ENCODE measurements at regions of chr6 and their contacts with region 1.

Region 1: GRCh38 chr6:36360241-36361054 is 23.8 kb upstream of the BNIP5 start:
- DNase-seq: no peak
- ATAC-seq: peak; percentile 65
- H3K4me3 ChIP-seq: no peak overlapping the region
- H3K27ac ChIP-seq: no peak overlapping the region
- H3K4me1 ChIP-seq: peaks cover 36% of the 10 kb centered on the region
- H3K27me3 ChIP-seq: no peaks in the 10 kb centered on the region
- CTCF ChIP-seq: peak; percentile 78 to 93 (median 81)
- EP300 ChIP-seq: peak in 1 of 2 experiments; percentile 16; a peak in 1 of 4 replicates
- POLR2A ChIP-seq: no peak
- RAD21 ChIP-seq: peak; percentile 94

Region 2: GRCh38 chr6:36123257-36124139 is 236.9 kb before region 1 on chr6:
- CTCF ChIA-PET with region 1: interaction called, 82 read pairs
- POLR2A ChIA-PET with region 1: interaction called, 4 read pairs
- RAD21 ChIA-PET with region 1: interaction called, 35 read pairs
- SMC1A ChIA-PET with region 1: interaction called, 75 read pairs
- in situ Hi-C with region 1: loop called (anchors 5 kb)
- intact Hi-C with region 1: loop called (anchors 1 kb)
- DNase-seq: no peak
- ATAC-seq: peak; percentile 92
- H3K4me3 ChIP-seq: no peak overlapping the region
- H3K27ac ChIP-seq: no peak overlapping the region
- H3K4me1 ChIP-seq: peaks cover 26% of the 10 kb centered on the region
- H3K27me3 ChIP-seq: no peaks in the 10 kb centered on the region
- CTCF ChIP-seq: peak; percentile 75 to 93 (median 91)
- EP300 ChIP-seq: 0 out of 4 replicates have a peak, but pooled peaks of 1 of the 2 experiments have one; percentile 26
- POLR2A ChIP-seq: no peak
- RAD21 ChIP-seq: peak; percentile 92

Region 3: DNA sequence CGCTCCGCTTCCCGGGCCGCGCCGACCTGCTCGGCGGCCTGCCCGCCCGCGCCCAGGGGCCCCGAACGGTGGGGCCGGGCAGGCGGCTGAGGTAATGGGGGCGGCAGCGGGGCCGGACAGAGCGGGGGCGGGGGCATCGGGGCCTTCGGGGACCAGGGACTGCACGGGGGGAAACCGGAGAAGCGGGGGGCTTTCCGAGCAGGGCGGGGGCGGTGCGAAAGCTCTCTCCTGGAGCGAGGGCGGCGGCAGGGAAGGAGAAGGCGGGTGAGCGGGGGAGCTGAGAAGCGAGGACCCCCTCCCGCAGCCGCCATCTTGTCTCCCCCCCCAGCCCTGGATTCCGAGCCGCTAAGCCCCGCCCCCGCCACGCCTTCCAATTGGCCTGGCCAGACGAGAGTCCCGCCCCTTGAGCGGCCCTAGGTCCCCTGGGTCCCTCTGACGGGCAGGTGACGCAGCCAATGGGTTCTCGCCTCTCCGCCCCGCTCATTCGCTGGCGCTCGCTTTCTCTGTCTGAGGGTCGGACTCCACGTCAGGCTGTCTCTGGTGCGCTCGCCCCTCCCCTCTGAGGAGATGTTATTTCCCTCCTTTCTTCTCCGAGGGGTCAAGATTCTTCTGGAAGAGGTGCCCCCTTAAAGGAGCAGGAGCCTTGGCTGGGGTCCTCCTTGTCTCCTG is 163.4 kb before region 1 on chr6:
- CTCF ChIA-PET with region 1: interaction called, 7 read pairs
- POLR2A ChIA-PET with region 1: interaction called, 5 read pairs
- RAD21 ChIA-PET with region 1: interaction called, 8 read pairs
- SMC1A ChIA-PET with region 1: interaction called, 11 read pairs
- in situ Hi-C with region 1: no loop called
- intact Hi-C with region 1: loop called (anchors 5 kb)
- DNase-seq: peak; percentile 88
- ATAC-seq: peak; percentile 97
- H3K4me3 ChIP-seq: peak overlapping the region; percentile 79
- H3K27ac ChIP-seq: peak overlapping the region; percentile 64
- H3K4me1 ChIP-seq: peaks cover 5% of the 10 kb centered on the region; the same call in 1 of the 2 replicates
- H3K27me3 ChIP-seq: no peaks in the 10 kb centered on the region
- CTCF ChIP-seq: no peak
- EP300 ChIP-seq: no peak
- POLR2A ChIP-seq: peak; percentile 79
- RAD21 ChIP-seq: no peak

Region 4: DNA sequence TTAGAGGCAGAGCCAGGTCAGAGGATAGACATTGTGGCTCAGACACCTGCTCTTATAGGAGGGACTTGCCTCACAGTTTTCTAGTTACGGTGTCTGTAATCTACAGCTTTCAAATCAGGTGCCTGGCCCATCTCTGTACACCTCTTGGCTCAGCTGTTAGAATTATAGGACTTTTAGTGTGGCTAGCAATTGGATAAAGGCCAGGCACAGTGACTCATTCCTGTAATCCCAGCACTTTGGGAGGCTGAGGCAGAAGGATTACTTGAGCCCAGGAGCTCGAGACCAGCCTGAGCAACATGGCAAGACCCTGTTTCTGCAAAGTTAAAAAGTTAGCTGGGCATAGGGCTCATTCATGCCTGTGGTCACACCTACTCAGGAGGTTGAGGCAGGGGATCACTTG is 143.9 kb before region 1 on chr6:
- CTCF ChIA-PET with region 1: no interaction called
- POLR2A ChIA-PET with region 1: no interaction called
- RAD21 ChIA-PET with region 1: no interaction called
- SMC1A ChIA-PET with region 1: no interaction called
- in situ Hi-C with region 1: no loop called
- intact Hi-C with region 1: no loop called
- DNase-seq: no peak
- ATAC-seq: no peak
- H3K4me3 ChIP-seq: no peak overlapping the region
- H3K27ac ChIP-seq: no peak overlapping the region
- H3K4me1 ChIP-seq: no peaks in the 10 kb centered on the region
- H3K27me3 ChIP-seq: no peaks in the 10 kb centered on the region
- CTCF ChIP-seq: no peak
- EP300 ChIP-seq: no peak
- POLR2A ChIP-seq: no peak
- RAD21 ChIP-seq: no peak

Region 5: GRCh38 chr6:36314221-36315014 is 46.0 kb before region 1 on chr6:
- CTCF ChIA-PET with region 1: interaction called, 313 read pairs
- POLR2A ChIA-PET with region 1: interaction called, 4 read pairs
- RAD21 ChIA-PET with region 1: interaction called, 19 read pairs
- SMC1A ChIA-PET with region 1: interaction called, 41 read pairs
- in situ Hi-C with region 1: no loop called
- intact Hi-C with region 1: no loop called
- DNase-seq: no peak
- ATAC-seq: peak; percentile 50
- H3K4me3 ChIP-seq: no peak overlapping the region
- H3K27ac ChIP-seq: no peak overlapping the region
- H3K4me1 ChIP-seq: peaks cover 20% of the 10 kb centered on the region
- H3K27me3 ChIP-seq: no peaks in the 10 kb centered on the region
- CTCF ChIP-seq: no peak
- EP300 ChIP-seq: no peak
- POLR2A ChIP-seq: no peak
- RAD21 ChIP-seq: no peak

Region 6: DNA sequence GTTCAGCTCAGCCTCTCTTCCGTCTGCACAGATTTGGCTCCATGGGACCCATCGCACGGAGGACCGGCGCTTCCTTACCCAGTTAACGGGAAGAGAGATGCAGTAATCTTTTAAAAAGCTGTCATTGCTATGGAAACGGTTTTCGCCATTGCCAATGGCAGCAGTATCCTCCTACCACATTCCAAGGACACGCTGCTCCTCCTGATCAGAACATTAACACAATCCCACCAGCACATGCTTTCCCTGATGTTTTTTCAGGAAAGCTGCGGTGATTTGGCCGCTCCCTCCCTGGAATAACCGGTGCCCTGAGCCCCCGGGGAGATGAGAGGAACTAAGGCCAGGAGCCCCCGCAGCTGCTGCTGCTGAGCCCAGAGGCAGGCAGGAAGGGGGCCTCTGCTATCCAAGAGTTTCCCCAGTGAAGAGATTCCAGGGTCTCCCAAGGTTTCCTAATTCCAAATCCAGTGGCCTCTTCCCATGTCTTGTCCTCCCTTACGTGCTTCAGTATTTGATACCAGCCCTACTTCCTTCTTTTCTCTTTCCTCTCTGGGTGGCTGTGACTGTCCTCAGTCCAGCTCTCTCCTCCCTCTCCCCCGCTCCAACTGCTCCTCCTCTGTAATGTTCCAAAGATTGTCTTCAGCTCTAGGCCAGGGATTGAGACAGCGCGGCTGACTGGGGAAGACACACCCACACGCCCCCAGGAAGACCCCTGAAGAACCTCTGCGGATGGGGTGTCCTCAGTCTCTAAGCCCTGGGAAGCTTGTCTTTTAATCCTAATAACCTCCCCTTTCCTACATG is 26.3 kb before region 1 on chr6:
- CTCF ChIA-PET with region 1: interaction called, 483 read pairs
- POLR2A ChIA-PET with region 1: interaction called, 44 read pairs
- RAD21 ChIA-PET with region 1: interaction called, 311 read pairs
- SMC1A ChIA-PET with region 1: interaction called, 386 read pairs
- in situ Hi-C with region 1: no loop called
- intact Hi-C with region 1: no loop called
- DNase-seq: no peak
- ATAC-seq: no peak
- H3K4me3 ChIP-seq: no peak overlapping the region
- H3K27ac ChIP-seq: no peak overlapping the region
- H3K4me1 ChIP-seq: peaks cover 22% of the 10 kb centered on the region
- H3K27me3 ChIP-seq: peaks cover 0 to 6% of the 10 kb centered on the region in 2 experiments; a peak in 1 of 4 replicates
- CTCF ChIP-seq: no peak
- EP300 ChIP-seq: no peak
- POLR2A ChIP-seq: no peak
- RAD21 ChIP-seq: no peak

Region 7: GRCh38 chr6:36442671-36443470 is 82.4 kb after region 1 on chr6 and contains the starts of genes KCTD20 and PXT1:
- CTCF ChIA-PET with region 1: interaction called, 5 read pairs
- POLR2A ChIA-PET with region 1: no interaction called
- RAD21 ChIA-PET with region 1: interaction called, 12 read pairs
- SMC1A ChIA-PET with region 1: no interaction called
- in situ Hi-C with region 1: no loop called
- intact Hi-C with region 1: no loop called
- DNase-seq: peak; percentile 48
- ATAC-seq: peak; percentile 85
- H3K4me3 ChIP-seq: peak within 1 kb of the TSS; percentile 86
- H3K27ac ChIP-seq: peak within 1 kb of the TSS; percentile 95
- H3K4me1 ChIP-seq: peaks cover 7% of the 10 kb centered on the region
- H3K27me3 ChIP-seq: no peaks in the 10 kb centered on the region
- CTCF ChIP-seq: no peak
- EP300 ChIP-seq: peak; percentile 32 to 56; a peak in 1 of 4 replicates
- POLR2A ChIP-seq: peak; percentile 91
- RAD21 ChIP-seq: no peak
- polyA plus RNA-seq, gene KCTD20: 18.1 to 20.1 TPM
- polyA plus RNA-seq, gene PXT1: 0.52 to 0.60 TPM

Region 8: DNA sequence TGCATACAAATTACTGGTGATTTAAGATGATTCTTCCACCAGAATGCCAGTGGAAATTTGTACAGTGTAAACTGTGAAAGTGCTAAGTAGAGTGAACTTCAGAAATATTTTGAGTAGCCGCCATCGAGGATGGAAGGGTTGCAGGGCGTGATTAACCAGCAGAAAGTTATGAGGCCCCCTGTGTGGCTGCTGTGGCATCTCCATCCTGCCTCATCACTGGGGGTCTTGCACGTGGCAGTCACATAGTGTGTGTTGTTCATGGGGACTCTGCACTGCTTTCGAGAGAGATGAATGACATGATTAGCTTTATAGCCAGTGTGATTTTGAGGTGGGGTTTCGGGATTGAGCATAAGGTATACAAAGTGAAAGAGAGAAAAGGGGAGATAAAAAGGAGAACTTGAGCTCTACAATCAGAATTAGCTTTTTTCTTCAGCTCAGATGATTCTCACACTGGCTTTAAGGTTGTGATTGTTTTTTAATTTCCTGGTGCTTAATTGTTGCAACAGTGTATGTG is 108.8 kb after region 1 on chr6:
- CTCF ChIA-PET with region 1: no interaction called
- POLR2A ChIA-PET with region 1: no interaction called
- RAD21 ChIA-PET with region 1: no interaction called
- SMC1A ChIA-PET with region 1: no interaction called
- in situ Hi-C with region 1: no loop called
- intact Hi-C with region 1: no loop called
- DNase-seq: no peak
- ATAC-seq: no peak
- H3K4me3 ChIP-seq: no peak overlapping the region
- H3K27ac ChIP-seq: no peak overlapping the region
- H3K4me1 ChIP-seq: peaks cover 4% of the 10 kb centered on the region
- H3K27me3 ChIP-seq: no peaks in the 10 kb centered on the region
- CTCF ChIP-seq: no peak
- EP300 ChIP-seq: no peak
- POLR2A ChIP-seq: no peak
- RAD21 ChIP-seq: no peak

Region 9: DNA sequence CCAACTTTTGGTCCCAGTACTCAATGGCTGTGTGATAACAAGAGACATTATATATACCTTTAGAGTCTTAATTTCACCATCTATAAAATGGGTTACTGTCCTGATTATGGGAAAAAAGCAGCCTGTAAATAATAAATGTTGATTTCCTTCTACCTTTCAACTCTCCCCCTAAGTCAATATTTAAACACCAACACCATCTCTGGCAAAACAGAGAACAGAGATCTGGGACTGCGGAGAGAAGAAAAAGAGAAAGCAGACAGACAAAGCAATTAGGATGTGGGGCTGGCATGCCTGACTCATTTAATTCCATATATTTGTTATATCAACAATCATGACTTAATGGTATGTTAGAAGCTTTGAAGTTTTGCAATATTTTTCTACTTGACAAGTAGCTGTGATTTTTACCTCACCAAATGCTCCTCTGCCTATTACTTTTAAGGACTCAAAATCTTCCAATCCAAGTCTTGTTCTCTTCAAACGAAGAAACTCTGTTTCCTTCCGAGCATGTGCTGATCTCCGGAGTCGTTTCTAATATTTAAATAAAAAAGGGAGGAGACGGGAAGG is 163.6 kb after region 1 on chr6:
- CTCF ChIA-PET with region 1: no interaction called
- POLR2A ChIA-PET with region 1: no interaction called
- RAD21 ChIA-PET with region 1: no interaction called
- SMC1A ChIA-PET with region 1: no interaction called
- in situ Hi-C with region 1: no loop called
- intact Hi-C with region 1: no loop called
- DNase-seq: no peak
- ATAC-seq: no peak
- H3K4me3 ChIP-seq: no peak overlapping the region
- H3K27ac ChIP-seq: no peak overlapping the region
- H3K4me1 ChIP-seq: no peaks in the 10 kb centered on the region
- H3K27me3 ChIP-seq: no peaks in the 10 kb centered on the region
- CTCF ChIP-seq: no peak
- EP300 ChIP-seq: no peak
- POLR2A ChIP-seq: no peak
- RAD21 ChIP-seq: no peak

Region 10: DNA sequence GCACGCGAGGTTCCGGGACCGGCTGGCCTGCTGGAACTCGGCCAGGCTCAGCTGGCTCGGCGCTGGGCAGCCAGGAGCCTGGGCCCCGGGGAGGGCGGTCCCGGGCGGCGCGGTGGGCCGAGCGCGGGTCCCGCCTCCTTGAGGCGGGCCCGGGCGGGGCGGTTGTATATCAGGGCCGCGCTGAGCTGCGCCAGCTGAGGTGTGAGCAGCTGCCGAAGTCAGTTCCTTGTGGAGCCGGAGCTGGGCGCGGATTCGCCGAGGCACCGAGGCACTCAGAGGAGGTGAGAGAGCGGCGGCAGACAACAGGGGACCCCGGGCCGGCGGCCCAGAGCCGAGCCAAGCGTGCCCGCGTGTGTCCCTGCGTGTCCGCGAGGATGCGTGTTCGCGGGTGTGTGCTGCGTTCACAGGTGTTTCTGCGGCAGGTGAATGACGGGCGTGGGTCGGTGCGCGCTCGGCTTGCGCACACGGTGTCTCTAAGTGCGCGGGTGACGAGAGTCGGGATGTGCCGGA is 318.1 kb after region 1 on chr6 and contains the start of gene CDKN1A:
- CTCF ChIA-PET with region 1: no interaction called
- POLR2A ChIA-PET with region 1: no interaction called
- RAD21 ChIA-PET with region 1: no interaction called
- SMC1A ChIA-PET with region 1: no interaction called
- in situ Hi-C with region 1: no loop called
- intact Hi-C with region 1: no loop called
- DNase-seq: no peak
- ATAC-seq: peak; percentile 75
- H3K4me3 ChIP-seq: peak within 1 kb of the TSS; percentile 75
- H3K27ac ChIP-seq: peak within 1 kb of the TSS; percentile 88
- H3K4me1 ChIP-seq: peaks cover 44% of the 10 kb centered on the region
- H3K27me3 ChIP-seq: no peaks in the 10 kb centered on the region
- CTCF ChIP-seq: no peak
- EP300 ChIP-seq: 0 out of 4 replicates have a peak, but pooled peaks of 1 of the 2 experiments have one; percentile 38
- POLR2A ChIP-seq: peak; percentile 95
- RAD21 ChIP-seq: no peak
- polyA plus RNA-seq, gene CDKN1A: 25.2 to 48.4 TPM